ENCODE measurements at regions of chr10 and their contacts with region 1.

Region 1: GRCh38 chr10:33612551-33612950 is 278.1 kb upstream of the NRP1 start:
- DNase-seq: no peak
- H3K4me3 Mint-ChIP-seq: no peak overlapping the region
- H3K27ac Mint-ChIP-seq: no peak overlapping the region
- H3K4me1 Mint-ChIP-seq: peaks cover 10% of the 10 kb centered on the region
- H3K27me3 Mint-ChIP-seq: peaks cover 4% of the 10 kb centered on the region

Region 2: DNA sequence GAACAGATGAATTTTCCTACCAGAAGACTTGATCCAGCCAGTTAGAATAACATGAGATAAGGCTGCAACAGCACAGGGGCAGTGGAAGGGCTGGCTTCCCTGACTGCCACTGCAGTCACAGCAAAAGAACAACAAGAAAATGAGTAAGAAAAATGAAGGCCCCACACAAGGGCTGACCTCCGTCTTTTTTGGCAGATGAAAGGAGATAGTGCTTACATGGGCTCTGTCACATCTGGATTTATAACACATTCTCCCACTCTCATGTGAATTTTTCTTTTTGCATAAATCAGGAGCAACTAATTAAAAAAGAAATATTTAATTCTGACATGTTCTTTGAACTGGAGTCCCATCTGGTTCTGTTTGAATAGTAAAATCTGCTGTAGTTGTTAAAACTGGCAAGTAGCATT is 377.7 kb before region 1 on chr10:
- CTCF ChIA-PET with region 1: no interaction called
- POLR2A ChIA-PET with region 1: no interaction called
- intact Hi-C with region 1: no loop called
- DNase-seq: no peak
- H3K4me3 Mint-ChIP-seq: no peak overlapping the region
- H3K27ac Mint-ChIP-seq: no peak overlapping the region
- H3K4me1 Mint-ChIP-seq: no peaks in the 10 kb centered on the region
- H3K27me3 Mint-ChIP-seq: peaks cover 9% of the 10 kb centered on the region

Region 3: DNA sequence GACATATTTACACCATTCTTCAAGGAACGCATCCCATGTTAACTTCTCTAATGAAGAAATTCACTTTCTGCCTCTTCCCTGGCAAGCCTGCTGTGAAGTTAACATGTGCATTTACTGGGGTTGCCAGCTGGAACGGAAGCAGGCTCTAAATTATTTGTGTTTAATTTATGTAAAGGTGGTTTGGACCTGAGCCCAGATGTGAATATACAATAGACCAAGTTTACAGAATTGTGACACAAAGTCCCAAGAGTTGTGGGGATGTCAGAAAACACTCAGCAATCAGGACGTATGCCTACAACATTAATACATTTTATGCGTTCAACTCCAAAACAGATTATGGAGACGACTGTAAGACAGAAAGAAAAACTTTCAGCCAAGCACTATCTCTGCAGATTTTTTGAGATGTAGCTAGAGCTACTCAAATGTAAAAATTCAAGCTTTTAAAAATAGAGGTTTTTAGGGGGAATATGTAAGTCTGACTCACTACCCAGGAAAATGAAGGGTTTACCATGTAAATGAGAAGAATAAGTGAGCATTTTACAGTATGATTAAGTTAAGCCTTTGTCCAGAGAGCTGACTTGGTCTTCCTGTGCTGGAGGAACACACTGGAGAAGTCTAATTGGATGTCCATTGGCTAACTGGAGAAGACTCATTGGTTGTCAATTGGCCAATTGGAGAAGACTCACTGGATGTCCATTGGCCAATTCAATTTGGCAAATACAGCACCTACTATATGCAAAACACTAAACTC is 297.6 kb before region 1 on chr10:
- CTCF ChIA-PET with region 1: no interaction called
- POLR2A ChIA-PET with region 1: no interaction called
- intact Hi-C with region 1: no loop called
- DNase-seq: no peak
- H3K4me3 Mint-ChIP-seq: no peak overlapping the region
- H3K27ac Mint-ChIP-seq: no peak overlapping the region
- H3K4me1 Mint-ChIP-seq: no peaks in the 10 kb centered on the region
- H3K27me3 Mint-ChIP-seq: no peaks in the 10 kb centered on the region

Region 4: GRCh38 chr10:33559105-33559504 is 53.4 kb before region 1 on chr10:
- CTCF ChIA-PET with region 1: no interaction called
- POLR2A ChIA-PET with region 1: no interaction called
- intact Hi-C with region 1: loop called (anchors 10 kb)
- DNase-seq: peak; percentile 10
- H3K4me3 Mint-ChIP-seq: no peak overlapping the region
- H3K27ac Mint-ChIP-seq: no peak overlapping the region
- H3K4me1 Mint-ChIP-seq: peaks cover 10% of the 10 kb centered on the region
- H3K27me3 Mint-ChIP-seq: peaks cover 34% of the 10 kb centered on the region

Measured in activated CD4-positive, alpha-beta memory T cell treated with anti-CD3 and anti-CD28 coated beads for 36 hours (primary cell).